Activated CD4-positive, alpha-beta T cell treated with anti-CD3 and anti-CD28 coated beads, Interleukin-2, amount 10 ng/mL, durations not matched to agents 24 days and 14 days (primary cell): ENCODE measurements at regions of chr20 and their contacts with region 1.

Region 1: GRCh38 chr20:40962730-40963504 is 65.7 kb upstream of the TOP1 start:
- DNase-seq: peak; percentile 92
- H3K4me3 Mint-ChIP-seq: no peak overlapping the region
- H3K27ac Mint-ChIP-seq: no peak overlapping the region
- H3K4me1 Mint-ChIP-seq: peaks cover 3% of the 10 kb centered on the region
- H3K27me3 Mint-ChIP-seq: peaks cover 2% of the 10 kb centered on the region

Region 2: DNA sequence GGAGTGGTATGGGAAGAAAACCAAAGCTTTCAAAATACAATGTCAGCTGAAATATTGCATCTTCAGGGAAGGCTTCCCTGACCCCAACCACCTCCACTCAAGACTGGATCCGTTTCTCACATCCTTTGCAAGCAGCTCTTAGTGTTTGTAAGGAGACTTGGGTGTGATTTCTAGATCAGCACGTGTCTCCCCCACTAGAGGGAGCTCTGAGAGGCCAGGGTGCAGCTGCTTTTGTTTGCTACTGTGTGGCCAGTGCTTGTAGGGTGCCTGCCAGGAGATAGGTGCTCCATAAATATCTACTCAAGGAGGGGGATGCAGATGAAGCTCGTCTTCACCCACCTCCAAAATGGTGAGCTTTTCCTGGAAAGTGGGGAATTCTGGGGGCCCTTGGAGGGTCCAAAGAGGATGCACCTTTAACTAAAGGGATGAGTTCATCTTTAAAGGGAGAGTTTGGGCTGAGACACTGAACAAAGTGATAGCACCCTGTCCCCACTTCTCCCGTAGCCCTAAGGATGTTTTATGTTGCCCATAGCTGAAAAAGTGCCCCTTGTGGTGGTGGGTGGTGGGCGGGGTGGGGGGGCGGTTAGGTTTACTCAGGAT is 221.3 kb before region 1 on chr20:
- intact Hi-C with region 1: loop called (anchors 1 kb)
- DNase-seq: peak; percentile 81
- H3K4me3 Mint-ChIP-seq: no peak overlapping the region
- H3K27ac Mint-ChIP-seq: no peak overlapping the region
- H3K4me1 Mint-ChIP-seq: no peaks in the 10 kb centered on the region
- H3K27me3 Mint-ChIP-seq: peaks cover 5% of the 10 kb centered on the region

Region 3: GRCh38 chr20:40797425-40797824 is 165.5 kb before region 1 on chr20:
- intact Hi-C with region 1: loop called (anchors 5 kb)
- DNase-seq: peak; percentile 60
- H3K4me3 Mint-ChIP-seq: no peak overlapping the region
- H3K27ac Mint-ChIP-seq: no peak overlapping the region
- H3K4me1 Mint-ChIP-seq: no peaks in the 10 kb centered on the region
- H3K27me3 Mint-ChIP-seq: peaks cover 14% of the 10 kb centered on the region

Region 4: GRCh38 chr20:41095110-41095969 is 132.4 kb after region 1 on chr20:
- intact Hi-C with region 1: loop called (anchors 1 kb)
- DNase-seq: peak; percentile 85
- H3K4me3 Mint-ChIP-seq: no peak overlapping the region
- H3K27ac Mint-ChIP-seq: no peak overlapping the region
- H3K4me1 Mint-ChIP-seq: peaks cover 10% of the 10 kb centered on the region
- H3K27me3 Mint-ChIP-seq: no peaks in the 10 kb centered on the region

Region 5: DNA sequence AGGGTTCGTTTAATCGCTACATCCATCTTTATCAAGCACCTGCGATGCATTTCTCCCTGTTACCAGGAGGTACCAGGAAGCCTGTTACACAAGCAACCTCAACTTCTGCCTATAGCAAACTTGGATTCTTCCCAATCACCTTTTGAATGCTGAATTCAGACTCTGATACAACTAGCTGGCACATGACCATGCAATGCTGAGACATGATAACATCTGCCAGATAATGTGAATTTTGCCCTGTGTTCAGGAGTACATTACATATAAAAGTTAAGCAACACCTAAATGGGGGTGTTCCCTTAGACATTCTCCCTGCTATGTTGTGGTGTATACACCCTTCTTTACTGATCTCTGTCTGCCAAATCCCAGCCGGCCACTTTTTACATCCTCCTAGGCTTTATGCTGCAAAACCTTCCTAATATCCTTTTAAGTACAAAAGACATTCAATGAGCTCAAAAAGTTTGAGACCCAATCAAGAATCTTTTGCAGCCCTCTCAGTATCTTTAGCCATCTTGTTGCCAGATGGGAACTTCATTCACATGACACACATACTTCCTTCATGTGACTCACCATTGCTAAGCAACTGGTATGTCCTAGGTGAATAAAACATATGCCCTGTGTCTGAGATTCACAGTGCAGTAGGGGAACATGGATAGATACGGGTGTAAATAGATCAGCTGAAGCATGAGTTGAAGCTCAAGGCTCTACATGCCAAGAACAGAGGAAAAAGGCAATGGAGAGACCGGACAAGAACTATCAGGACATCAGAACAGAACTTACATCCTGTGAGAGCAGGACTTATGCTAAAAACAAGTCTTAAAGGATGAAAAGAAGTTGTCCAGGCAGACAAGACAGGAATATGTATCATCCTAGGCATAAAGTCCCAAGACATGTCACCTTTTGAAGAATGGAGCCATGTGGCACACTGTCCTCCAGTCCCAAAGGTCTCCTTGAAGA is 270.3 kb after region 1 on chr20:
- intact Hi-C with region 1: loop called (anchors 2 kb)
- DNase-seq: no peak
- H3K4me3 Mint-ChIP-seq: peak overlapping the region; percentile 28
- H3K27ac Mint-ChIP-seq: peak overlapping the region; percentile 3
- H3K4me1 Mint-ChIP-seq: peaks cover 28% of the 10 kb centered on the region
- H3K27me3 Mint-ChIP-seq: no peaks in the 10 kb centered on the region

Region 6: DNA sequence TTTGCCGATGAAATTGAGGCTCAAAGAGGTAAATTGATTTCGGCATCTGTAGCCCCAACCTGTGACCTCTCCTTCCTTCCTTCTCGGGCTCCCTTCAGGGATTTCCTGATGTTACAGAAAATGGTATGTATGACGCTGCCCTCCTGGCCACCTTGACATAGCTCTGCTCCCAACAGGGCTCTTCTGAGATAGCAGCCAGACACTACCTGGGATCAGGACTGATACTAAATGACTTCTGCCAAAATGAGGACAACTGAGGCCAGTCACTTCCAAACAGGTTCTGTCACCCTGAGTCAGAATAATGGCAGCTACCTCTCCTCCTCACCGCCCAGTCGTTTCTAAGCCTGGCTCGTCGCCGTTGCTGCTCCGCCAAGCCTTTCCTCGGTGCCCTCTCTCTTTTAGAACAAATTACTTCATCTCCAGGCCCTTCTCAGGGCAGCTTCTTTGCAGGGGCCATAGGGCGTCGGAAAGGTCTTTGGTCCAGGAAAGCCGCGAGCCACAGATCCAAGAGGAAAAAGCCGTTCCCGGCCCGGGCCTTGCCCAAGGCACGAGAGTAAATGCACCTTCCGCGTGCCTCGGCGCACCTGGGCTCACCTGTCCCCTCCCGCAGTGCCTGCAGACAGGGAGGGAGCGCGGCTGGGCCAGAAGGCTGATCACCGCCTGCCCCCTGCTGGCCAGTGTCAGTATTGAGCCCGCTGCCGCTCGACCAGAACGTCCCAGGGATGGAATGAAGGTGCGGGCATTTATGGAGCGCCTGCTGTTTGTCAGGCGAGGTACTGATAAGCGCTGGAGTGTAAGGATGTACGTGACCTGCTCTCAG is 376.8 kb after region 1 on chr20:
- intact Hi-C with region 1: loop called (anchors 1 kb)
- DNase-seq: peak; percentile 96
- H3K4me3 Mint-ChIP-seq: peak overlapping the region; percentile 84
- H3K27ac Mint-ChIP-seq: peak overlapping the region; percentile 43
- H3K4me1 Mint-ChIP-seq: peaks cover 10% of the 10 kb centered on the region
- H3K27me3 Mint-ChIP-seq: peaks cover 10% of the 10 kb centered on the region

Region 7: GRCh38 chr20:41380551-41381193 is 417.8 kb after region 1 on chr20:
- intact Hi-C with region 1: no loop called
- DNase-seq: no peak
- H3K4me3 Mint-ChIP-seq: no peak overlapping the region
- H3K27ac Mint-ChIP-seq: no peak overlapping the region
- H3K4me1 Mint-ChIP-seq: peaks cover 4% of the 10 kb centered on the region
- H3K27me3 Mint-ChIP-seq: peaks cover 44% of the 10 kb centered on the region